Gastrocnemius medialis (tissue), 4 donors: ENCODE measurements at regions of chr22 and their contacts with region 1.

Region 1: GRCh38 chr22:23539135-23539838 is 40.8 kb downstream of the IGLL1 start:
- DNase-seq: peak; percentile 45 to 61
- ATAC-seq: peak; percentile 92 to 98
- H3K4me3 ChIP-seq: no peak overlapping the region
- H3K27ac ChIP-seq: no peak overlapping the region
- H3K4me1 ChIP-seq: peaks cover 0 to 9% of the 10 kb centered on the region in 2 donors
- H3K27me3 ChIP-seq: no peaks in the 10 kb centered on the region
- CTCF ChIP-seq: peak; percentile 75 to 86 (median 80)
- POLR2A ChIP-seq: no peak

Region 2: DNA sequence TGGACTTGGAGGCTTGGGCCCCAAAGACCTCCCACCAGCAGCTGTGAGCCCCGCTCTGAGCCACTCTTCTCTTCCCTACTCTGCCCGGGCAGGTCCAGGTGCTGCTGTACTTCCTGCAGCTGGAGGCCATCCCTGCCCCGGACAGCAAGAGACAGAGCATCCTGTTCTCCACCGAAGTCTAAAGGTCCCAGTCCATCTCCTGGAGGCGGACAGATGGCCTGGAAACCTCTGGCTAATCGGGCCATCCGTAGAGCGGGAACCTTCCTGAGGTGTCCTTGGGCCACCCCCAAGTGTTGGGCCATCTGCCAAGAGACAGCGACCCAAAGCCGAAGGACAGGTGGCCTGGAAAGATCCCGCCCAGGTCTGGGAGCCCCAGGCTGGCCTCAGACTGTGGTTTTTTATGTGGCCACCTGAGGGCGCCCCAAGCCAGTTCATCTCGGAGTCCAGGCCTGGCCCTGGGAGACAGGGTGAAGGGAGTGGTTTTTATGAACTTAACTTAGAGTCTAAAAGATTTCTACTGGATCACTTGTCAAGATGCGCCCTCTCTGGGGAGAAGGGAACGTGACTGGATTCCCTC is 223.9 kb before region 1 on chr22:
- in situ Hi-C with region 1: loop called in 1 of 4 experiments (anchors 25 kb)
- intact Hi-C with region 1: no loop called
- DNase-seq: peak in 1 of 2 donors; percentile 31
- ATAC-seq: no peak
- H3K4me3 ChIP-seq: no peak overlapping the region
- H3K27ac ChIP-seq: no peak overlapping the region
- H3K4me1 ChIP-seq: no peaks in the 10 kb centered on the region
- H3K27me3 ChIP-seq: no peaks in the 10 kb centered on the region
- CTCF ChIP-seq: peak; percentile 25 to 73 (median 54)
- POLR2A ChIP-seq: no peak

Region 3: GRCh38 chr22:23521441-23522113 is 17.7 kb before region 1 on chr22:
- in situ Hi-C with region 1: no loop called
- intact Hi-C with region 1: loop called (anchors 1 kb)
- DNase-seq: peak; percentile 56 to 80
- ATAC-seq: peak; percentile 81 to 88
- H3K4me3 ChIP-seq: peak overlapping the region; percentile 56 to 63 (median 58)
- H3K27ac ChIP-seq: peak overlapping the region; percentile 66 to 84 (median 72)
- H3K4me1 ChIP-seq: peaks cover 8 to 13% of the 10 kb centered on the region in 2 donors
- H3K27me3 ChIP-seq: no peaks in the 10 kb centered on the region
- CTCF ChIP-seq: no peak
- POLR2A ChIP-seq: peak; percentile 17 to 35

Region 4: DNA sequence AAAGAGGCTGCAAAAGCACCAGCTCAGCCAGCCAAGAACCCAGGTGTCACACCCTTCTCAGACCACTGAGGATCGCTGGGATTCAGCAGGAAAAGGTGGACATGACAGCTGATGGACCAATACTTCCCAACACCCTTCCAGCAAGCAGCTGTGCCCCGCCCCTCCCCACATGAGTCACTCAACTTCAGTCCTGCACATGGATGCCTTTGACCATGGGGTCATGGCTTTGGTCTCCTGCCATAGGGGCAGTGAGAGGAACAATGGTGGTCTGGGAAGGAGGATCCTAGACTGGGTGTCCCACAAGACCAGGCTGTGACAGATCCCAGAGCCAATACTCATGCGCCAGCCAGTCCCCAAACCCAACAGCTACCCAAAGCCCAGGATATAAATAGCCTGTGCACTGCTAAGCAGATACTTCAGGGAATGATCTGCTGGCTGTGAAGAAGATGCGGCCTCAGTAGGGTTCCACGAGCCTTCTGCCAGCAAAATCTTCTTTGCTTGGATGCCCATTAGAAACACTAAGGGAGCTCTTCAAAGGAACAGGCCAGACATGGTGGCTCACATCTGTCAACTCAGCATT is 146.0 kb after region 1 on chr22:
- in situ Hi-C with region 1: no loop called
- intact Hi-C with region 1: no loop called
- DNase-seq: peak; percentile 37 to 78
- ATAC-seq: peak; percentile 65 to 73
- H3K4me3 ChIP-seq: no peak overlapping the region
- H3K27ac ChIP-seq: peak overlapping the region; percentile 85 to 90 (median 86)
- H3K4me1 ChIP-seq: peaks cover 37 to 57% of the 10 kb centered on the region in 2 donors
- H3K27me3 ChIP-seq: no peaks in the 10 kb centered on the region
- CTCF ChIP-seq: no peak
- POLR2A ChIP-seq: no peak

Region 5: DNA sequence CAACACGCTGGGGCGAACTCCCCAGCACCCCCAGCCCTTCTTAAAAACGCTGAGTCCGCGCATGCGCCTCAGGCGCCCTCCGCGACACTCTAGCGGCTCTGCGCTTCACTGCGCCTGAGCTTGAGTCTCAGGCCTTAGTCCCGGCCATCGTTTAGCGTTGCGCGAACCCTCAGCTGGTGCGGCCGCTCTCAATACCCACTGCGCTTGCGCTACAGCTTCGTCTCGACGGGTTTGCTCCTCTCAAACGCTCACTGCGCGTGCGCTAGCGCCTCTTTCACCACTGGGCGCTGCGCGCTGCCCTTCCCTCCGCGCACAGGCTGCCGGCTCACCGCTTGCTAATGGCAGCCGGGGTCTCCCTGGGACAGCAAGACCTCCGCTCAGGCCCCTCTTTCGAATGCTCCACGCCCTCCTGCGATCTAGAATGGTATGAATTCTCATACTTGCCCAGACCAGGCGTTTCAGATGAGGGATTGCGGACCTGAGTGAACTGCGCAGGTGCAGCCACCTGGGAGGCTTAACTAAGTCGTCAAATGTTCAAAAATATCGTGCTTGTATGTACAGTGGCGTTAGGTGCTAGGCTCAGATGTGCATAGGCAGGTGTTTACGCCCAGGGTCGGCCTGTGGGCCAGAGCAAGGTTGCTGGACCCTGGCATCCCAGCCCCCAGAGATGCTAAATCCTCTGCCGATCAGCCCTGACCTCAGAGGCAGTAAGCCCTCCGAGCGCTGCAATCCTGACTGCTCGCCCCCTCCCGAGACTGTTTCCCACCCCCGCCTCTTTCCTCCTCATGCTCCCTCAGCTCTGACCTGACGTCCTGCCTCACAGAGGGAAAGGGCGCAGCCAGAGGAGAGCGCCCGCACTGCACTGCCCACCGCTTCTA is 318.6 kb after region 1 on chr22 and contains the start of gene SLC2A11:
- in situ Hi-C with region 1: loop called in 3 of 4 experiments (anchors 10 to 25 kb)
- intact Hi-C with region 1: no loop called
- DNase-seq: peak; percentile 94 to 97
- ATAC-seq: peak; percentile 94 to 95
- H3K4me3 ChIP-seq: peak within 1 kb of the TSS; percentile 77 to 88 (median 86)
- H3K27ac ChIP-seq: peak within 1 kb of the TSS; percentile 94 to 99 (median 98)
- H3K4me1 ChIP-seq: peaks cover 18 to 23% of the 10 kb centered on the region in 2 donors
- H3K27me3 ChIP-seq: no peaks in the 10 kb centered on the region
- CTCF ChIP-seq: peak in 2 of 5 experiments; percentile 23 to 33
- POLR2A ChIP-seq: peak; percentile 70 to 87
- total RNA-seq, gene SLC2A11: 2.4 to 19.0 (median 6.2) TPM